ENCODE measurements at regions of chr15 and their contacts with region 1.

Region 1: DNA sequence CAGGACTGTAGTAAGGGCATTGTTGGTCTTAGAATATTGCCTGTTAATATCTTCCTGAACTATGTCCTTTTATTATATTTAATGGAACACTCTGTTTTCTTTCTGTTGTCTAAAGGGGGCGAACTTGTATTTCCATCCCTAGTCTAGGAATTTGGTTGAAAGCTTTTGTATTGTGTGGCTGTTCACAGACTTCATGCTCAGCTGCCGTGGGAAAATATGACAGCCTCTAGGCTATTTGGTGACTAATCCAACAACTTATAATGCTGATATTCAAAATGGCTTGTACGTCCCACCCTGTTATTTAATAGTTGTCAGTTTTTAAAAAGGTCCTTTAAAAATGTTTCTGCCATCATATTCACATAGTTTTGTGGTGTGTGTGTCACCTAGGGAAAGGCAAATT is 202.6 kb downstream of the KLHL25 start:
- DNase-seq: no peak
- ATAC-seq: peak in 3 of 4 donors; percentile 62 to 75 (median 69)
- H3K4me3 ChIP-seq: no peak overlapping the region
- H3K27ac ChIP-seq: peak overlapping the region in 11 of 12 donors; percentile 16 to 69 (median 55)
- H3K4me1 ChIP-seq: peaks cover 5 to 89% (median 65%) of the 10 kb centered on the region in 12 donors
- H3K27me3 ChIP-seq: no peaks in the 10 kb centered on the region
- CTCF ChIP-seq: peak in 9 of 12 donors; percentile 17 to 58 (median 40)
- POLR2A ChIP-seq: no peak

Region 2: DNA sequence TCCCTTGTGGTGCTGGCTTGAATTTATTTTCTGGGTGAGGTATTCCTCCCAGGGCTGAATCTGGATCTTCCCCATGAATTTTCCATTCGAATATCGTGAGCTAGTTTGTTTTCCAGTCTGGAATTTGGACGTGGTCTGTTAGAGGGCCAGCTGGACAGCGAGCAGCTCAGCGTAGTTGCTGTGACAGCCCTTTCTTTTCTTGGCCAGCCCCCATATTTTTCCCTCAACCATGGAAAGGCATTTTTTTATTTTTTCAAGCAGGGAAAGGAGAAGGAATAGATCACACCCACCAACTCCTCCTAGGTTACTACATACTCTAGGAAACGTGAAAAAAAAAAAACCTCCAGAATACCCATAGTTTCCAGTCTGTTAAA is 50.5 kb after region 1 on chr15:
- intact Hi-C with region 1: loop called in 1 of 10 experiments (anchors 1 kb)
- DNase-seq: peak; percentile 62 to 82 (median 77)
- ATAC-seq: peak; percentile 67 to 84 (median 80)
- H3K4me3 ChIP-seq: peak overlapping the region in 6 of 12 donors; percentile 3 to 32 (median 15)
- H3K27ac ChIP-seq: peak overlapping the region; percentile 63 to 89 (median 74)
- H3K4me1 ChIP-seq: peaks cover 0 to 91% (median 56%) of the 10 kb centered on the region in 12 donors
- H3K27me3 ChIP-seq: no peaks in the 10 kb centered on the region
- CTCF ChIP-seq: peak in 1 of 12 donors; percentile 7
- POLR2A ChIP-seq: no peak

Region 3: DNA sequence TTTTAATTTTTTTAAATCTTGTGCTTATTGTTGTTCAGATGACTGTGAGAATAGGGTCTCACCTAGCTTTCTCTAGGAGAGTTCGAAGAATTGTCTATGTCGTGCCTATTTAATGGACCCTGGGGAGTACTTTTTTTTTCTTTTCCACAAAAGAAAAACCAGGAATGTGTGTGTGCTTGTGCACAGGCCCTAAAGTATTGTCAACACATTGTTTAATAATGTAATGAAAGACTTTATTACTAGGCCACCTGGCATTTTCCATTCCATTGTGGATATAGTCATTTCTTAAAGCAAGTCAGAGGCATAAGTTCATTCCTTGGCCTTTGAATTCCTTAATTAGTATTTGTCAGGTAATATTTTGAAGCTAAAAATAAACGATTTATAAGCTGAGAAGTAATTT is 66.7 kb after region 1 on chr15:
- intact Hi-C with region 1: no loop called
- DNase-seq: no peak
- ATAC-seq: no peak
- H3K4me3 ChIP-seq: no peak overlapping the region
- H3K27ac ChIP-seq: peak overlapping the region in 1 of 12 donors; percentile 4
- H3K4me1 ChIP-seq: peaks cover 0 to 32% (median 11%) of the 10 kb centered on the region in 12 donors
- H3K27me3 ChIP-seq: no peaks in the 10 kb centered on the region
- CTCF ChIP-seq: no peak
- POLR2A ChIP-seq: no peak